Heart left ventricle (tissue), 16 donors: ENCODE measurements at regions of chr12 and their contacts with region 1.

Region 1: DNA sequence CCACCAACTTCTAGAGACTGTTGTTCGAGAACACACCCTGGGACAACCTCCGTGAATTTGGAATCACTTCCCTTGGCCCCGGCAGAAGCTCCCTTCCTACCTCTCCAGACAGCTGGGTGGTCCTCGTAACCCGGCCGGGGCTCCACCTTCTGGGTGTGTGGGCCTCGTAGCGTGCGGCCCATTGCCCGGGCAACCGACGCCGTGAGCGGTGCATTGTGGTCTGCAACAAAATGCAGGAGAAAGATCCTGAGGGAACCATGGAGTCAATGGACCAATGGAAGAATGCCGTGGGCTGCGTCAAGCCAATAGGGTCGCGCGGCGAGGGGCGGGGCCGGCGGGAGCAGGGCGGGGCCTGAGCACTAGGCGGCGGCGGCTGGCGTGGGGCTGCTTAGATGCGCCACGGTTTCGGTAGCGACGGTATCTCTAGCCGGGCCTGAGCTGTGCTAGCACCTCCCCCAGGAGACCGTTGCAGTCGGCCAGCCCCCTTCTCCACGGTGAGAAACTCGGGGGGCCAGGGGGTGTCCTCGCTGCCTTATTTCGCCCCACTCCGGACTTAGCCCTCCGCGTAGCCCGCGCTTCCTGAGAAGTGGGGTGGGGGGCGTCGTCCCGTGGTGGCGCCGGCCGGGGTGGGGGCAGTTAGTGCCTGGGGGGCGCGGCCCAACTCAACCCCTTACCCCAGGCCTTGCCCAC is at the start of gene DYNLL1:
- DNase-seq: peak; percentile 95 to 98 (median 96)
- ATAC-seq: peak; percentile 97 to 99 (median 98)
- H3K4me3 ChIP-seq: peak within 1 kb of the TSS; percentile 74 to 100 (median 92)
- H3K27ac ChIP-seq: peak within 1 kb of the TSS; percentile 75 to 97 (median 92)
- H3K4me1 ChIP-seq: peaks cover 0 to 32% (median 19%) of the 10 kb centered on the region in 12 donors
- H3K27me3 ChIP-seq: no peaks in the 10 kb centered on the region
- CTCF ChIP-seq: peak in 2 of 12 donors; percentile 11 to 14
- POLR2A ChIP-seq: peak; percentile 33 to 87
- total RNA-seq, gene DYNLL1: 92.2 to 269 (median 120) TPM

Region 2: GRCh38 chr12:120437754-120438494 is 57.9 kb before region 1 on chr12 and contains the start of gene COX6A1:
- intact Hi-C with region 1: loop called in 1 of 10 experiments (anchors 2 kb)
- DNase-seq: peak; percentile 93 to 98 (median 96)
- ATAC-seq: peak; percentile 96 to 99 (median 98)
- H3K4me3 ChIP-seq: peak within 1 kb of the TSS; percentile 62 to 97 (median 83)
- H3K27ac ChIP-seq: peak within 1 kb of the TSS; percentile 76 to 92 (median 88)
- H3K4me1 ChIP-seq: peaks cover 0 to 23% (median 16%) of the 10 kb centered on the region in 12 donors
- H3K27me3 ChIP-seq: no peaks in the 10 kb centered on the region
- CTCF ChIP-seq: peak in 1 of 12 donors; percentile 2
- POLR2A ChIP-seq: peak in 1 of 2 donors; percentile 47
- total RNA-seq, gene COX6A1: 117 to 318 (median 172) TPM

Region 3: GRCh38 chr12:120445911-120446843 is 49.7 kb before region 1 on chr12 and contains the starts of genes GATC and TRIAP1:
- intact Hi-C with region 1: loop called in 1 of 10 experiments (anchors 5 kb)
- DNase-seq: peak; percentile 85 to 92 (median 86)
- ATAC-seq: peak; percentile 91 to 99 (median 98)
- H3K4me3 ChIP-seq: peak within 1 kb of the TSS; percentile 65 to 100 (median 94)
- H3K27ac ChIP-seq: peak within 1 kb of the TSS; percentile 63 to 93 (median 88)
- H3K4me1 ChIP-seq: peaks cover 11 to 35% (median 22%) of the 10 kb centered on the region in 12 donors
- H3K27me3 ChIP-seq: no peaks in the 10 kb centered on the region
- CTCF ChIP-seq: peak in 1 of 12 donors; percentile 16
- POLR2A ChIP-seq: no peak
- total RNA-seq, gene GATC: 8.5 to 18.0 (median 11.8) TPM
- total RNA-seq, gene TRIAP1: 6.4 to 17.6 (median 14.9) TPM

Region 4: DNA sequence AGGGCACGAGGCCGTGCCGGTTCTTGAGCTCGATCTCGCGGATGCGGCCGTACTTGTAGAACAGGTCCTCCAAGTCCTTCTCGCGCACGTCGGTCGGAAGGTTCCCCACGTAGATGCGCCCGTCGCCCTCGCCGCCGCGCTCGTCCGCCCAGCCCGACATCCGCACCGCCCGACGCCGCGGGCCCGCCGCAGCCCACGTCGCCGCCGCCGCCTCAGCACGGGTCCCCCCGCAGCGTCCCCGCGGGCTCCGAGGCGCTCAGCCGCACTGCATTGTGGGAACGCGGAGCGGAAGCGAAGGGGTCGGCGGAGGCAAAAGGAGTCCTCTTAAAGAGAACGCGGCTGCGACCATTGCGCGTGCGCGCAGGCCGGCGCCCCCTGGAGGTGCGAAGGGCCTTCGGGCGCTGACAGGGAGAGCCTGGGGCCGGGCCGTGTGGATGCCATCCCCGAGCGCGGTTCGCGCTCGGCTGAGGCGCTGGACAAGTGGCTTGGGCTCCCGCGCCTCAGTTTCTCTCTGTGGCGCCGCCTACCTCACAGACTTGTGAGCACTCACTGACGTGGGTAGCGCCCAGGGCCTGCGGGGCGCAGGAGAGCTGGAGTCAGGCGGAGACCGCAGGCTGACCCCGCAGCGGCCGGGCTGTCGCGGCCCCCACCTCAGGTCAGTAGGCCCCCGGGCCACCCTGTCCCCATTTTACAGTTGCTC is 26.3 kb before region 1 on chr12 and contains the start of gene SRSF9:
- intact Hi-C with region 1: loop called in 2 of 10 experiments (anchors 2 kb)
- DNase-seq: peak; percentile 96 to 99 (median 97)
- ATAC-seq: peak; percentile 95 to 98 (median 96)
- H3K4me3 ChIP-seq: peak within 1 kb of the TSS; percentile 63 to 99 (median 92)
- H3K27ac ChIP-seq: peak within 1 kb of the TSS; percentile 76 to 96 (median 92)
- H3K4me1 ChIP-seq: peaks cover 0 to 45% (median 31%) of the 10 kb centered on the region in 12 donors
- H3K27me3 ChIP-seq: no peaks in the 10 kb centered on the region
- CTCF ChIP-seq: peak; percentile 84 to 100 (median 94)
- POLR2A ChIP-seq: peak in 1 of 2 donors; percentile 61
- total RNA-seq, gene SRSF9: 14.8 to 67.1 (median 33.7) TPM

Region 5: GRCh38 chr12:120534203-120534702 is 38.4 kb after region 1 on chr12 and contains the start of gene RNF10:
- intact Hi-C with region 1: loop called in 2 of 10 experiments (anchors 5 kb)
- DNase-seq: peak; percentile 76 to 88 (median 83)
- ATAC-seq: peak; percentile 59 to 83 (median 74)
- H3K4me3 ChIP-seq: peak within 1 kb of the TSS; percentile 68 to 99 (median 94)
- H3K27ac ChIP-seq: peak within 1 kb of the TSS; percentile 94 to 98 (median 96)
- H3K4me1 ChIP-seq: peaks cover 12 to 50% (median 38%) of the 10 kb centered on the region in 12 donors
- H3K27me3 ChIP-seq: no peaks in the 10 kb centered on the region
- CTCF ChIP-seq: no peak
- POLR2A ChIP-seq: peak; percentile 97 to 98
- total RNA-seq, gene RNF10: 165 to 363 (median 278) TPM

Region 6: GRCh38 chr12:120580787-120581723 is 85.2 kb after region 1 on chr12 and contains the start of gene POP5:
- intact Hi-C with region 1: no loop called
- DNase-seq: peak; percentile 96 to 97 (median 97)
- ATAC-seq: peak; percentile 92 to 97 (median 94)
- H3K4me3 ChIP-seq: peak within 1 kb of the TSS; percentile 61 to 97 (median 81)
- H3K27ac ChIP-seq: peak within 1 kb of the TSS in 11 of 12 donors; percentile 47 to 84 (median 70)
- H3K4me1 ChIP-seq: peaks cover 0 to 36% (median 26%) of the 10 kb centered on the region in 12 donors
- H3K27me3 ChIP-seq: peaks cover 0 to 9% (median 0%) of the 10 kb centered on the region in 9 donors
- CTCF ChIP-seq: no peak
- POLR2A ChIP-seq: peak in 1 of 2 donors; percentile 77
- total RNA-seq, gene POP5: 20.6 to 46.6 (median 36.3) TPM